Activated CD4-positive, alpha-beta T cell treated with anti-CD3 and anti-CD28 coated beads, Interleukin-2, amount 10 ng/mL, durations not matched to agents 7 days and 5 days (primary cell): ENCODE measurements at regions of chr5 and their contacts with region 1.

Region 1: GRCh38 chr5:58460732-58461286 is 923 bp upstream of the PLK2 start:
- DNase-seq: peak; percentile 92
- H3K4me3 Mint-ChIP-seq: peak overlapping the region; percentile 76
- H3K27ac Mint-ChIP-seq: peak overlapping the region; percentile 26
- H3K4me1 Mint-ChIP-seq: peaks cover 19% of the 10 kb centered on the region
- H3K27me3 Mint-ChIP-seq: peaks cover 28% of the 10 kb centered on the region

Region 2: GRCh38 chr5:57298295-57298984 is 1162.4 kb before region 1 on chr5:
- CTCF ChIA-PET with region 1: interaction called, 16 read pairs
- POLR2A ChIA-PET with region 1: no interaction called
- DNase-seq: peak; percentile 92
- H3K4me3 Mint-ChIP-seq: peak overlapping the region; percentile 43
- H3K27ac Mint-ChIP-seq: peak overlapping the region; percentile 60
- H3K4me1 Mint-ChIP-seq: peaks cover 25% of the 10 kb centered on the region
- H3K27me3 Mint-ChIP-seq: peaks cover 8% of the 10 kb centered on the region

Region 3: GRCh38 chr5:57499262-57500050 is 961.4 kb before region 1 on chr5:
- CTCF ChIA-PET with region 1: interaction called, 12 read pairs
- POLR2A ChIA-PET with region 1: no interaction called
- DNase-seq: peak; percentile 21
- H3K4me3 Mint-ChIP-seq: peak overlapping the region; percentile 60
- H3K27ac Mint-ChIP-seq: peak overlapping the region; percentile 81
- H3K4me1 Mint-ChIP-seq: peaks cover 45% of the 10 kb centered on the region
- H3K27me3 Mint-ChIP-seq: peaks cover 4% of the 10 kb centered on the region

Region 4: DNA sequence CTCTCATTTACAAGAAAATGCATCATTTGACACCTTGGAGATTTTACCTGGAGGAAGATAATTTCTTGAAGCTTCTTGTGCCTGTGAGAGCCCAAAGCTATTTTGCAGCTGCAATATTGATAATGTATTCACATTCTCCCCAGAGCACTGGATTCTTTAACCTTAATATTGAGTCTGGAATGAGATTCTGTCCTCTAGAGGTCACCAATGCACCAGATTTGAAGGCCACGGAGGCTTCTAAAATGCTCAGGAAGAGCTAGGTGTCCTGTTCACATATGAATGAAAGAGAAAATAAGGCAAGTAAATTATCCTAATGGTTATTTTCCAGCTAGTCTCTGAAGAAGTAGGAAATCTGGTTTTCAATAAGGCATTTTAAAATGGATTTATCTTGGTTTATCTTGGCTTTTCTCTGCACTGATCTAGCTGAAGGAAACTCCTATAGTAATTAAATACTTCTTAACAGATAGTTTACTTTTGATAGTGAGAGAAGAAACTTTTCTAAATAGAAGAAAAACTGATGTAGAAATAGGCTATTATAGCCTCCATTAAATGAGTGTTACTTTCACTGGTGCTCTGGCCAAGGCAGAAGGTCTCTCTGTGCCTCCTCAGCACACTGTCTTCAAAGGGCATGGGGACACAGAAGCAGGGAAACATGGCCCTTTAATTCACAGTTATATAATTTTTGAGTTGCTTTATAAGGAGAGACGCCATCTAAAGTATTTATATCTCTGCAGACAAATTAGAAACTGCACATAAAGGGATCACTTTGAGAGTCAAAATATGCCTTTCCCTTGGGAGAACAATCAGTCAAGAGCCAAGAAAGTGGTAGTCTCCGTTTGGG is 681.2 kb before region 1 on chr5:
- CTCF ChIA-PET with region 1: interaction called, 14 read pairs
- POLR2A ChIA-PET with region 1: no interaction called
- DNase-seq: peak; percentile 20
- H3K4me3 Mint-ChIP-seq: no peak overlapping the region
- H3K27ac Mint-ChIP-seq: no peak overlapping the region
- H3K4me1 Mint-ChIP-seq: no peaks in the 10 kb centered on the region
- H3K27me3 Mint-ChIP-seq: peaks cover 5% of the 10 kb centered on the region

Region 5: GRCh38 chr5:58595952-58596351 is 135.1 kb after region 1 on chr5:
- CTCF ChIA-PET with region 1: no interaction called
- POLR2A ChIA-PET with region 1: no interaction called
- DNase-seq: no peak
- H3K4me3 Mint-ChIP-seq: no peak overlapping the region
- H3K27ac Mint-ChIP-seq: no peak overlapping the region
- H3K4me1 Mint-ChIP-seq: no peaks in the 10 kb centered on the region
- H3K27me3 Mint-ChIP-seq: peaks cover 3% of the 10 kb centered on the region